Activated CD4-positive, alpha-beta T cell treated with anti-CD3 and anti-CD28 coated beads, Interleukin-2, amount 10 ng/mL, durations not matched to agents 24 days and 14 days (primary cell): ENCODE measurements at regions of chr4 and their contacts with region 1.

Region 1: DNA sequence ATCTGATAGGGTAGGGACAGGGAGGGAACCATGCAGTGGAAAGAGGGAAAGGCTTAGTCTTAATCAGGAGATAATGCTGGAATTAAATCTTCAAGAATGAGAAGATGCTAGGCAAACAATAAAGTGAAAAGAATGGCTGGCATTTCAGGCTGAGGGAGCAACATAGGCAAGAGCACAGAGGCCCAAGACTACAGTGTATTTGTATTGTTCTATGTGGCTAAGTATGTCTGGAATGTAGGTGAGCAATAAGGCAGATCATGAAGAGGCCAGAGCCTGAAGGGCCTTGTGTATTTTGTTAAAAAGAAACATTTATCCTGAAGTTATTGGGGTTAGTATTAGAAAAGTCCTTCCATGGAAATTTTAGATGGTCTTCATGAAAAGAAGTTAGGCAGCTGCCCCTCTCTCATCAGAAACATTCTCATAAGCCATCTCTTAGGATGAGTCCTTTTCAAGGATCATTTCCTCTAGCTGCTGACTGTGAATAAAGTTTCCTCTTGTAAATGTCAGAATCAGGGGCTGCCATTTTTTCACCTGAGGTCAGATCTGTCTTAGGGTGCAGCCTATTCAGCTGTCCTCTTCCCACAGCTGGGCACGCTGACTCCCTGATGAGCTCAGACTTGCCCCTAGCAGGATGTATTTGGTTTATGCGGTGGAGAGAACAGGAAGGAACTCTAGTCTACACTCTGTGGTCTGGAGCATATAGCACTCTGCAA is 46.3 kb downstream of the ATP10D start:
- DNase-seq: peak; percentile 89
- H3K4me3 Mint-ChIP-seq: peak overlapping the region; percentile 56
- H3K27ac Mint-ChIP-seq: peak overlapping the region; percentile 84
- H3K4me1 Mint-ChIP-seq: peaks cover 38% of the 10 kb centered on the region
- H3K27me3 Mint-ChIP-seq: no peaks in the 10 kb centered on the region

Region 2: DNA sequence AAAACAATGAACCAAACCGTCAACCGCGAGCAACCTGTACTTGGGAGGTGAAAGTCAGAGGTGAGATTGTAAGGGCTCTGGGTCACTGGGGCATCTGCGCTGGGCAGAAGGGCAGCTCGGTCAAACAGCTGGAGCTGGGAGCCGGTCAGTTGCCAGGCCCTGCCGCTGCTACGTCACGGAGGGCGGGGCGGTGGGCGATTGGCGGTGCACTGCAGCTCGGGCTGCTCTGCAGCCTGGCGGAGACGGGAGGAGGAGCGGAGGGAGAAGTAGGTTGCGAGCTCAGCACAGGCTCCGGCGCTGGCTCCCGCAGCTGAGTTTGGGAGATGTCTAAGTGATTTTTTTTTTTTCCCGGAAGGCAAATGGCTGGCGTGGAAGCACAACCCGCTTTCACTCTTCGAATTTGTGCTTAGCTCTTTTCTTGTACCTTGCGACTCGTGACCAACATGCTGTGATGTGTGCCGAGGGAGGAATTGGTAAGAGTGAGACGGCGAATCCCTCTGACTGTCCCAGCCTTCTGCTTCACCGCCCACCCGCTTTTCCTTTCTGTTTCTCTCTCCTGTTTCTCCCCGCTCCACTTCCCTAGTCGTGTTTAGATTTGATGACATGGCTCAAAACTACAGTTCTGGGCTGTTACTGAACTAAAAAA is 46.2 kb before region 1 on chr4 and contains the start of gene ATP10D:
- intact Hi-C with region 1: loop called (anchors 5 kb)
- DNase-seq: peak; percentile 93
- H3K4me3 Mint-ChIP-seq: peak within 1 kb of the TSS; percentile 93
- H3K27ac Mint-ChIP-seq: peak within 1 kb of the TSS; percentile 85
- H3K4me1 Mint-ChIP-seq: peaks cover 21% of the 10 kb centered on the region
- H3K27me3 Mint-ChIP-seq: peaks cover 10% of the 10 kb centered on the region
- total RNA-seq, gene ATP10D: 0.71 and 1.3 TPM in 2 replicates

Region 3: GRCh38 chr4:47543331-47543730 is 11.9 kb after region 1 on chr4:
- intact Hi-C with region 1: no loop called
- DNase-seq: no peak
- H3K4me3 Mint-ChIP-seq: no peak overlapping the region
- H3K27ac Mint-ChIP-seq: no peak overlapping the region
- H3K4me1 Mint-ChIP-seq: no peaks in the 10 kb centered on the region
- H3K27me3 Mint-ChIP-seq: no peaks in the 10 kb centered on the region